Colonic mucosa (tissue), 4 donors: ENCODE measurements at regions of chr3 and their contacts with region 1.

Region 1: GRCh38 chr3:16247276-16248061 is 17.3 kb downstream of the DPH3 start:
- DNase-seq: peak; percentile 84
- H3K4me3 ChIP-seq: no peak overlapping the region
- H3K27ac ChIP-seq: no peak overlapping the region
- H3K4me1 ChIP-seq: no peaks in the 10 kb centered on the region
- H3K27me3 ChIP-seq: no peaks in the 10 kb centered on the region
- CTCF ChIP-seq: peak; percentile 90

Region 2: GRCh38 chr3:15629860-15630597 is 617.4 kb before region 1 on chr3:
- intact Hi-C with region 1: loop called (anchors 10 kb)
- DNase-seq: peak; percentile 71
- H3K4me3 ChIP-seq: peak overlapping the region; percentile 8
- H3K27ac ChIP-seq: peak overlapping the region; percentile 9
- H3K4me1 ChIP-seq: no peaks in the 10 kb centered on the region
- H3K27me3 ChIP-seq: no peaks in the 10 kb centered on the region
- CTCF ChIP-seq: peak; percentile 71

Region 3: GRCh38 chr3:15815696-15816095 is 431.8 kb before region 1 on chr3:
- intact Hi-C with region 1: loop called (anchors 10 kb)
- DNase-seq: no peak
- H3K4me3 ChIP-seq: no peak overlapping the region
- H3K27ac ChIP-seq: no peak overlapping the region
- H3K4me1 ChIP-seq: no peaks in the 10 kb centered on the region
- H3K27me3 ChIP-seq: no peaks in the 10 kb centered on the region
- CTCF ChIP-seq: no peak

Region 4: DNA sequence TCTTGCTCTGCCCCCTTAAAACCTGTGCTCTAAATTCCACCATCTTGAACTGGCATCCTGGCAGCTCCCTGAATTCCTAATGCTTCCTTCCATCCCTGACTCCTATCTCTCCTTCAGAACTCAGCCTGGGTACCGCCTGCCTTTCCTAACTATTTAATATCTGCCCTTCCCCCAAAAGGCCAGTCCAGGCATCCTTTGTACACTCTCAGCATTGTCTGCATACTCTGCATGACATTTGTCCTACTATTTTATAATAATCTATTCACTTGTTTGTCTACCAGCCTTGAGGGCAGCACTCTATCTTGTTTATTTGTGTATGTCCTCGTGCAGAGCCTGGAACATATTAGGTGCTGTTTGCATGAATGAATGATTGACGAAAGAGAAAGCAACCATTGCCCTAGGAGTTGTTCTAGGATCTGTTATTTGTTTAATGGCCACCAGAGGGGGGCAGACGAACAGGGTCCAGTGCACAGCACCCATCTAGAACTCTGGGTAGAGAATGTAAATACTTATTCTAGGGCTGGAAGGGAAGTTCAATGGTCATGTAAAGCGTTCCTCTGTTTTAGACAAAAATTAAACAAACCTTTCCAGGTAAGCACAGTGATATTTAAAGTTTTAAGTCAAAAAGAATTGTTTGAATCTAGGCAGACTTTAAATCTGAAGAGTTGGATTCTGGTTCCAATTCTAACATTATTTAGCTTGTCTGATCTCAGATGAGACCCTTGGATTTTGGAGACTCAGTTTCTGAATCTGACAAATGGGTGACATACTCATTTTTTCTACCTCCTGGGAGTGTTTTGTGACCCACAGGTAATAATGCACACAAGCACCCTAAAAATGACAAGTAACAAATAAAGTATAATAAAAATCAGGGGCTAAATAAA is 198.8 kb before region 1 on chr3:
- intact Hi-C with region 1: loop called (anchors 2 kb)
- DNase-seq: peak; percentile 64
- H3K4me3 ChIP-seq: no peak overlapping the region
- H3K27ac ChIP-seq: no peak overlapping the region
- H3K4me1 ChIP-seq: no peaks in the 10 kb centered on the region
- H3K27me3 ChIP-seq: no peaks in the 10 kb centered on the region
- CTCF ChIP-seq: peak; percentile 69

Region 5: DNA sequence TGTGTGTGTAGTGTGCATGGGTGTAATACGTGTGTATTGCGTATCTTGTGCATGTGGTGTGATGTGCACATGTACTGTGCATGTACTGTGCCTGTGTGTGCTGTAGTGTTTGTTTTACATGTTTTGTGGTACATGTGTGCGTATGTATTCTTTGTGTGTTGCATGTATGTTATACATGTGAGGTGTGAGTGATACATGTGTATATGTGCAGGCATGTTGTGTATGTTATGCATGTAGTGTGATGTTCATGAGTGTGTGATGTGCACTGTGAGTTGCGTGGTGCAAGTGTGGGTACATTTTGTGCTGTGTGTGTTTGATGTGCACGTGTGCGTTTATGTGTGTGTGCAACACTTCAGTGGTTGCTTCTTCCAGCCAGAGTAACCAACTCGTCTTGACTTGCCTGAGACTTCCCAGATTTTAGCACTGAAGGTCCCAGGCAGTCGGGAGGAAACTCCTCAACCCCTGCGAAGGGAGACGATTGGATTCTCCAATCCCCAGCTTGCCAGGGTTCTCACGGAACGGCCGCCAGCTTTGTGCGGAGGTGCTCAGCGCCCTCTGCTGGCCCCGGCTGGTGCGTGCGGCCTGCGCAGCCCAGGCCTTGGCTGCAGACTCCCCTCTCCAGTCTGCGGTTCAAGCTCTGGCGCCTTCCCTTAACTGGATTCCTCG is 69.4 kb before region 1 on chr3:
- intact Hi-C with region 1: loop called (anchors 5 kb)
- DNase-seq: peak; percentile 77
- H3K4me3 ChIP-seq: no peak overlapping the region
- H3K27ac ChIP-seq: no peak overlapping the region
- H3K4me1 ChIP-seq: no peaks in the 10 kb centered on the region
- H3K27me3 ChIP-seq: no peaks in the 10 kb centered on the region
- CTCF ChIP-seq: peak; percentile 95

Region 6: DNA sequence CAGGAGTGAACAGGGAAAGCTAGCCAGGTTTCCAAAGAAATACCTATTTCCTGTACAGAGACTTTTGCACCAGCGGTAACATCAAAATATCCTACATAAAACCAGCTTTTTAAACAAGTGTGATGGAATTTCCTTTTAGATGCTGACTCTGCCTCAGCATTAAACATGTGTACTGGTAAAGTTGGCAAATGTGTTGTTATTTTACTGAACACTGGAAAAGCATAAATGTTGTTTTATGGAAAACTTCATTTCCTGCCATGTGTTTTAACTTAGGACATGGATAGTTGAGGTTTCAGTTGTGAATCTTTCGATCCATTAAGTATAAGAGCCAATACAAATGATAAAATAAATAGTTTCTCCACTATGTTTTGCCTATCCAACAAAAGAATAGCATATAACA is 33.2 kb after region 1 on chr3:
- intact Hi-C with region 1: no loop called
- DNase-seq: no peak
- H3K4me3 ChIP-seq: no peak overlapping the region
- H3K27ac ChIP-seq: no peak overlapping the region
- H3K4me1 ChIP-seq: no peaks in the 10 kb centered on the region
- H3K27me3 ChIP-seq: no peaks in the 10 kb centered on the region
- CTCF ChIP-seq: no peak

Region 7: GRCh38 chr3:17023006-17023664 is 775.7 kb after region 1 on chr3:
- intact Hi-C with region 1: no loop called
- DNase-seq: no peak
- H3K4me3 ChIP-seq: no peak overlapping the region
- H3K27ac ChIP-seq: no peak overlapping the region
- H3K4me1 ChIP-seq: no peaks in the 10 kb centered on the region
- H3K27me3 ChIP-seq: no peaks in the 10 kb centered on the region
- CTCF ChIP-seq: no peak